Activated CD4-positive, alpha-beta memory T cell treated with anti-CD3 and anti-CD28 coated beads for 36 hours (primary cell): ENCODE measurements at regions of chr18 and their contacts with region 1.

Region 1: GRCh38 chr18:47912343-47912742 is 18.1 kb downstream of the SMAD2 start:
- DNase-seq: peak; percentile 51
- H3K4me3 Mint-ChIP-seq: peak overlapping the region; percentile 45
- H3K27ac Mint-ChIP-seq: peak overlapping the region; percentile 90
- H3K4me1 Mint-ChIP-seq: peaks cover 98% of the 10 kb centered on the region
- H3K27me3 Mint-ChIP-seq: no peaks in the 10 kb centered on the region

Region 2: GRCh38 chr18:46097801-46098615 is 1814.3 kb before region 1 on chr18 and contains the start of gene ATP5F1A:
- CTCF ChIA-PET with region 1: no interaction called
- POLR2A ChIA-PET with region 1: no interaction called
- intact Hi-C with region 1: loop called (anchors 10 kb)
- DNase-seq: peak; percentile 94
- H3K4me3 Mint-ChIP-seq: peak within 1 kb of the TSS; percentile 98
- H3K27ac Mint-ChIP-seq: peak within 1 kb of the TSS; percentile 93
- H3K4me1 Mint-ChIP-seq: peaks cover 25% of the 10 kb centered on the region
- H3K27me3 Mint-ChIP-seq: no peaks in the 10 kb centered on the region
- total RNA-seq, gene ATP5F1A: 442 to 447 TPM

Region 3: DNA sequence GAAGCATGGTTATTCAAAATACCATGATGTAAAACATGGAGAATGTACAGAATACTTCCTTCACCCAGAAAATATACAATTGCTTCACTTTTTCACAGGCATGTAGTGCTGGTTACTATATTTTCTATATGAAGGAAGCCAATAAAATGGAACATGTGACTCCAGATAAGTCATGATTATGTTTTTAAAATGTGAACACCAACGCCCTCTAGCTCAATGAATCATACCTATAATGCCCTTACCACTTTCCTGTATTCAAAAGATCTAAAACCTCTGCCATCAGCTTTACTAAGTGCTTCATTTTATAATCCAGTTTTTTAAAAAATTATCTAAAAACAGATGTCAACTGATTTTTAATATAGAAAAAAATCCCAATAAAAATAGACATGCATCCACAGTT is 41.7 kb before region 1 on chr18:
- CTCF ChIA-PET with region 1: interaction called, 4 read pairs
- POLR2A ChIA-PET with region 1: no interaction called
- intact Hi-C with region 1: loop called (anchors 2 kb)
- DNase-seq: no peak
- H3K4me3 Mint-ChIP-seq: no peak overlapping the region
- H3K27ac Mint-ChIP-seq: peak overlapping the region; percentile 14
- H3K4me1 Mint-ChIP-seq: peaks cover 43% of the 10 kb centered on the region
- H3K27me3 Mint-ChIP-seq: no peaks in the 10 kb centered on the region

Region 4: DNA sequence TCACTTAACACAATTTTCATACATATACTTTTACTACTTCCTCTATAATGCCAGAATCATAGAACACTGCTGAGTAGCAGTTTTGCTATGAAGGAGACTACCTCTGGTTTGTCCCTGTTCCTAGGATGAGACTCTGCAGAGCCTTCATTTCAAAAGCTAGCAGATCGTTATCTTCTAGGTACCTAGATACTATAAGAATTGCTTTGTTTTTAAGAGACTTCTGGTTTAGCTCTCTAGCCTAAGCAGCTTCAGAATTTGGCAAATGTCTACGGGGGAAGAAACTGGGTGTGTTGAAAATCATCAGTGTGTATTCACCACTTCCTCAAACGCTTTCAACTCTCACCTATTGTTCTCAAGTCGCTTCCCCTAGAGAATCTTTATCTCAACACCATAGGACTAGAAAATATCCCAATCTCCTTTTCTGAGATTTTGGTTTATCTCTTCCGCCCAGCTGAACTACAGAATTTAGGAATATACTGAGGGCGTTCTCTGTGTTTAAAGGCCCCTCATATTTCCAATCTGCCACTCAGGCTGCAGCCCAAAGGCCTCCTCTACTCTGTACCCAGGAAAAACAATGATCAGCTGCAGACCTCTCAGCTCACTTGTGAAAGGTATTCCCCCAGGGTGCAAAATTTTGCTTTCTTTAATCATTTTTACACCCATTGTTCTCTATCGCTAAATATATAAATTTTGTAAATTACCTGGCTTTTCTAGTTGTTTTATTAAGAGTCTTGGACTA is 10.6 kb before region 1 on chr18:
- CTCF ChIA-PET with region 1: interaction called, 8 read pairs
- POLR2A ChIA-PET with region 1: interaction called, 12 read pairs
- intact Hi-C with region 1: loop called (anchors 1 kb)
- DNase-seq: no peak
- H3K4me3 Mint-ChIP-seq: peak overlapping the region; percentile 9
- H3K27ac Mint-ChIP-seq: peak overlapping the region; percentile 87
- H3K4me1 Mint-ChIP-seq: peaks cover 95% of the 10 kb centered on the region
- H3K27me3 Mint-ChIP-seq: no peaks in the 10 kb centered on the region